Activated B cell treated with CpG ODN at 0.5 μM for 24 hours (primary cell): ENCODE measurements at regions of chr19 and their contacts with region 1.

Region 1: DNA sequence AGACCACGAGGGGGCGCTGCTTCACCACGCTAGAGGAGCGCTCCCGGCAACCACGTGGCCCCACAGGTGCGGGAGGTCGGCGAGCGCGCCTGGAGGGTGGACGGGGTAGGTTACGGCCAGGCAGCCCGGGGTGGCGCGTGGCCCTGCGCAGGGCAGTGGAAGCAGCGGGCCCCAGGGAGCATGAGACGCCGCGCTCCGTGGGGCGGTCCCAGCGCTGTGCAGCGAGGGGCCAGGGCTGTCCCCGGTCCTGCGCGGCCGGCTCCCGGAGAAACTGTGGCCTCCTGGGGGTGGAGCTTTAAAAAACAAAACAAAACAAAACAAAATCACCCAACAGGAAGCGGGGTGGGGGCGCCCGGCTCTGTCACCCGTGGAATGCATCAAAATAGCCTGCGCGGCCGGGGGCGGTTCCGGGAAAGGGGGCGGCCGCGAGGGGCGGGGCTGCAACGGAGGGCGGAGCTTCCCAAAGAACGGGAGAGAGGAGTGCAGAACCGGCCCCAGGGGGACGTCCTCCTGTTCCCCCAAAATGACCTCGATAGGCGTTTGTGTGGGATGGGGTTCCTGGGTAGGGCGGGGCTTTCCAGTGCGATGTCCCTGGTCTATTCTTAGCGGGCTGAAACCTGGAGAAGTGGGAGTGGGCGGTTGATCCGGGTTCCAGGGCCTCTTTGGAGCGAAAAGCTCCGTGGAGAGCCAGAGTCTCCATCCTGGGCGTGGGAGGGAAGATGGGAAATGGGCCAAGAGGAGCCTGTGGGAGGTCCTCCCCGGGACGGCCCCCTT is 27.3 kb downstream of the NUMBL start:
- DNase-seq: peak; percentile 95
- ATAC-seq: peak; percentile 91
- H3K4me3 Mint-ChIP-seq: peak overlapping the region; percentile 85
- H3K27ac Mint-ChIP-seq: peak overlapping the region; percentile 76
- H3K4me1 Mint-ChIP-seq: peaks cover 17% of the 10 kb centered on the region
- H3K27me3 Mint-ChIP-seq: no peaks in the 10 kb centered on the region
- CTCF ChIP-seq: peak; percentile 68

Region 2: GRCh38 chr19:40690693-40691420 is 27.7 kb after region 1 on chr19:
- CTCF ChIA-PET with region 1: interaction called, 6 read pairs
- POLR2A ChIA-PET with region 1: interaction called, 8 read pairs
- intact Hi-C with region 1: loop called (anchors 1 kb)
- DNase-seq: peak; percentile 76
- ATAC-seq: peak; percentile 78
- H3K4me3 Mint-ChIP-seq: peak overlapping the region; percentile 95
- H3K27ac Mint-ChIP-seq: peak overlapping the region; percentile 89
- H3K4me1 Mint-ChIP-seq: peaks cover 16% of the 10 kb centered on the region
- H3K27me3 Mint-ChIP-seq: no peaks in the 10 kb centered on the region
- CTCF ChIP-seq: no peak

Region 3: DNA sequence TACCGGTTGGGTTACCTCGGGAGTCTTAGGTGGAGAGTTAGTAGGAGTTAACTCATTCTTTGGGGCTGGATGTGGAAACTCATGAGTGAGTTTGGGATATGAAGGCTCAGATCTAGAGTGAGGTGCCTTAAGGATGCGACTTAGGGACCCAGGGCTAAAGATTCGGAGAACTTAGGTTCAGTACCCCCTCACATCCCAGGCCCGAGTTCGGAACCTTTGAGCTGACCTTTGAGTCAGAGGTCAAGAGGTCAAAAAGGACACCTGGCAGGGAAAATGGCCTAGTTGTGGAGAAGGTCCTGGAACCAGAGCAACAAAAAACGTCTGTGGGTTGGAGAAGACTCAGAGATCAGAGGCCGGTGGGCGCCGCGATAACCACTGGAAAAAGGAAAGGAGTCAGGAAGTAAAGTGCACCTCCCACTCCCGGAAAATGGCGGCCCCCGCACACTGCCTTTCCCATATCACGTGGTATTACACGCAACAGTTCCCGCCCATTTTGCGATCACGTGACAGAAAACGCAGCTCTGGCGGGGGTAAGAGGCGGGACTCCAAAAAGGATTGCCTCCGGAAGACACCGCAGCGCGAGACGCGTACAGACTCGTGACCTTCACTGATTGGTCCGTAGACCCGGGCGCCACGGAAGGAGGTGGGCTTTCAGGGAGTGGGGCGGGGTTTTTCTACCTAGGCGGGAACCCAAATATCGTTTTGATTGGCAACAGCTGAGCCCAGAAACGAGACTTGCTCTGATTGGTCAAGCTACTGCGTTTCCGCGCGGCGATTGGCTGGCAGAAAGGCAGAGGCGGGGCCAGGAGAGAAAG is 87.2 kb after region 1 on chr19 and contains the start of gene ACTMAP:
- CTCF ChIA-PET with region 1: interaction called, 4 read pairs
- POLR2A ChIA-PET with region 1: interaction called, 11 read pairs
- intact Hi-C with region 1: loop called (anchors 1 kb)
- DNase-seq: peak; percentile 97
- ATAC-seq: peak; percentile 88
- H3K4me3 Mint-ChIP-seq: peak within 1 kb of the TSS; percentile 97
- H3K27ac Mint-ChIP-seq: peak within 1 kb of the TSS; percentile 96
- H3K4me1 Mint-ChIP-seq: peaks cover 49% of the 10 kb centered on the region
- H3K27me3 Mint-ChIP-seq: no peaks in the 10 kb centered on the region
- CTCF ChIP-seq: no peak
- total RNA-seq, gene ACTMAP: 8.5 and 12.7 TPM in 2 replicates

Region 4: DNA sequence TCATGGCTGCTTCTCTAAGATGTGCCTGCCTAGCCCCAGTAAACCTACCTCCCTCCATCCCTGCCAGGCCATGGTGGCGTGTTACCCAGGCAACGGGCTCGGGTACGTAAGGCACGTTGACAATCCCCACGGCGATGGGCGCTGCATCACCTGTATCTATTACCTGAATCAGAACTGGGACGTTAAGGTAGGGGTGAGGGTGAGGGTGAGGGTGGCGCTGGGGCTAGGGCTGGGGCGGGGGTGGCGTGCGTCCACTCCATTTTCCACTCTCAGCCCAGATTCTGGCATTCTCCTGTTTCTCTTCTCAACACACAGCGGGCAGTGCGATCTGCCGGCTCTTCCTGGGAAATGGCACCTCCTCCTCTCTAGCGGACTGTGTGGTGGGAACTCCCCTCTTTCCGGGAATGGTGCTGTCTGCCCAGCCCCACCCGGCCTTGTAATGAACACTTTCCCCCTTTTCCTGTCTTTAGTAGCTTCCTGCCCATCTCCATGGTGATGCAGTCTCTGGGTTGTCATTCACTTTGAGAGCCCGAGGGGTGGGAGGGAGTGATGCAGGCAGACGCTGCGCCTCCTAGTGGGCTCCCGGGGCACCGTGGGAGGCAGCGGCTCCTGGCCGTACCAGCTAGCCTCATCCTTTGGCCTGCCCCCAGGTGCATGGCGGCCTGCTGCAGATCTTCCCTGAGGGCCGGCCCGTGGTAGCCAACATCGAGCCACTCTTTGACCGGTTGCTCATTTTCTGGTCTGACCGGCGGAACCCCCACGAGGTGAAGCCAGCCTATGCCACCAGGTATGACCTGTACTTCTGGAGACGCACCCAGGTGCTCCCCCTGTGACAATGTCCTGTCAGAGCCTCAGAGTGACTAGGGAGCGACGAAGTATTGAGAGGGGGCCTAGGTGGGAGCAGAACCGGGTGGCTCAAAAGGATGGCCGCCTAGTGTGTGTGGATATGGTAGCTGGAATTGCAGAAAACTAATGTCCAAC is 143.7 kb after region 1 on chr19:
- CTCF ChIA-PET with region 1: interaction called, 25 read pairs
- POLR2A ChIA-PET with region 1: interaction called, 3 read pairs
- intact Hi-C with region 1: loop called (anchors 1 kb)
- DNase-seq: peak; percentile 60
- ATAC-seq: peak; percentile 18
- H3K4me3 Mint-ChIP-seq: peak overlapping the region; percentile 69
- H3K27ac Mint-ChIP-seq: peak overlapping the region; percentile 87
- H3K4me1 Mint-ChIP-seq: peaks cover 84% of the 10 kb centered on the region
- H3K27me3 Mint-ChIP-seq: no peaks in the 10 kb centered on the region
- CTCF ChIP-seq: no peak

Region 5: DNA sequence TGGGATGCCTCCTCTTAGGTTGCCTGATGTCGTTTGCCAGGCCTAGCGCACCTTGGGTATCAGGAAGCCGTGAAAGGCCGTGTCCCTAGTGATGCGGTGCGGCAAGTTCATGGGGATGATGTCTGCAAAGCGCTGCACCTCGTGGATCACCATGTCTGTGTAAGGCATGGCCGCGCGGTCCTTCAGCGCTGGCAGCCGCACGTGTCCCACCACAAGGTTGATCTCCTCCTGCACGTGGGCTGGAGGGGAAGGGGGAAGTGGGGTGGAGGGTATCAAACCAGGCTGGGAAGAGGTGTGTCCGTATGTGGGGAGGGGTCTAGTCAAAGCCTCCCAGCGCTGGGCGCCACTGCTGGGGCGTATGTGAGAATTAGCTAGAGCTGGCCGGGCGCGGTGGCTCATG is 159.1 kb after region 1 on chr19:
- CTCF ChIA-PET with region 1: interaction called, 54 read pairs
- POLR2A ChIA-PET with region 1: interaction called, 8 read pairs
- intact Hi-C with region 1: loop called (anchors 1 kb)
- DNase-seq: no peak
- ATAC-seq: no peak
- H3K4me3 Mint-ChIP-seq: no peak overlapping the region
- H3K27ac Mint-ChIP-seq: no peak overlapping the region
- H3K4me1 Mint-ChIP-seq: peaks cover 35% of the 10 kb centered on the region
- H3K27me3 Mint-ChIP-seq: no peaks in the 10 kb centered on the region
- CTCF ChIP-seq: no peak

Region 6: GRCh38 chr19:41123716-41124294 is 460.7 kb after region 1 on chr19:
- CTCF ChIA-PET with region 1: interaction called, 3 read pairs
- POLR2A ChIA-PET with region 1: no interaction called
- intact Hi-C with region 1: loop called (anchors 5 kb)
- DNase-seq: no peak
- ATAC-seq: no peak
- H3K4me3 Mint-ChIP-seq: no peak overlapping the region
- H3K27ac Mint-ChIP-seq: no peak overlapping the region
- H3K4me1 Mint-ChIP-seq: peaks cover 16% of the 10 kb centered on the region
- H3K27me3 Mint-ChIP-seq: peaks cover 19% of the 10 kb centered on the region
- CTCF ChIP-seq: no peak

Region 7: GRCh38 chr19:41310033-41310758 is 647.1 kb after region 1 on chr19 and contains the start of gene CCDC97:
- CTCF ChIA-PET with region 1: no interaction called
- POLR2A ChIA-PET with region 1: interaction called, 3 read pairs
- intact Hi-C with region 1: loop called (anchors 1 kb)
- DNase-seq: peak; percentile 92
- ATAC-seq: peak; percentile 76
- H3K4me3 Mint-ChIP-seq: peak within 1 kb of the TSS; percentile 99
- H3K27ac Mint-ChIP-seq: peak within 1 kb of the TSS; percentile 100
- H3K4me1 Mint-ChIP-seq: peaks cover 65% of the 10 kb centered on the region
- H3K27me3 Mint-ChIP-seq: no peaks in the 10 kb centered on the region
- CTCF ChIP-seq: no peak
- total RNA-seq, gene CCDC97: 61.7 and 65.3 TPM in 2 replicates